Calu3 (cell line): ENCODE measurements at regions of chr6 and their contacts with region 1.

Region 1: GRCh38 chr6:151842816-151843215 is 35.3 kb downstream of the ESR1 start:
- DNase-seq: no peak
- H3K4me3 Mint-ChIP-seq: no peak overlapping the region
- H3K27ac Mint-ChIP-seq: no peak overlapping the region
- H3K4me1 Mint-ChIP-seq: no peaks in the 10 kb centered on the region
- H3K27me3 Mint-ChIP-seq: no peaks in the 10 kb centered on the region
- CTCF ChIP-seq: no peak

Region 2: DNA sequence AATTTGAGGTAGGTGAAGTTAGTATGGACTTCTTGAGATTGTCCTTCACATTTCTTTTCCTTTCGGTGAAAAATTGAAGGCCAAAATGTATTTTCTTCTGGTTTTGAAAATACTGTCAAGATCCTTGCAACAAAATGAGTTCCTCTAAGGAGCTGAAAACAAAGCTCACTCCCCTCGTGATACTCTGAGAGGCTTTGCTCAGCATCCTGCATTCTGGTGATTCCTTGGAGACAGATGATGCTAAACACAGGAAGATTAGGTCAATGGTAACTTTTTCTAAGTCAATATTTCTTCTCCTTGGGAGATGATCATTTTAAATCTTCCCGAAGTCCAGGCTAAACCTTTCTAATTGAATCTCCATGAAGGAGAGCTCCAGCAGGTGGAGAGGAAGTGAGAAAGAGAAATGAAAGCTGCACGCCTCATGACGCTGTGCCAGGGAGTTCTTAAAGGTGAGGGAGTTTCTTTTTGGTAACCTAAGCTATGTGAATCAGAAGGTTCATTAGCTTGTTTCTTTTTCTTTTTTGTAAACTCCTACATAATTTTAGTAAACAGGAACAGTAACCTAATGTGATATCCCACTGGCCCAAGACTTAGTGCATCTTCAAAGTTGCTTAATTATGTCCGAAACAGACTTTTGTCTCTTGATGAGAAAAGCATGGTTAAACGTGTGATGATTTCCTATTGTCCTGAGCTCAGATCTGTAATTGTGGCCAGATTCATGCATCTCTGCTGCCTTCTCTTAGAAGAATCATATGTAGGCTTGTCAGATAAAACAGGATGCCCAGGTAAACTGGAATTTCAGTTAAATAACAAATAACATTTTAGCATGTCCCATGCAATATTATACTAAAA is 20.3 kb before region 1 on chr6:
- CTCF ChIA-PET with region 1: no interaction called
- intact Hi-C with region 1: no loop called
- DNase-seq: no peak
- H3K4me3 Mint-ChIP-seq: no peak overlapping the region
- H3K27ac Mint-ChIP-seq: no peak overlapping the region
- H3K4me1 Mint-ChIP-seq: no peaks in the 10 kb centered on the region
- H3K27me3 Mint-ChIP-seq: no peaks in the 10 kb centered on the region
- CTCF ChIP-seq: no peak

Region 3: GRCh38 chr6:151858294-151858693 is 15.5 kb after region 1 on chr6:
- CTCF ChIA-PET with region 1: no interaction called
- intact Hi-C with region 1: loop called (anchors 1 kb)
- DNase-seq: no peak
- H3K4me3 Mint-ChIP-seq: no peak overlapping the region
- H3K27ac Mint-ChIP-seq: no peak overlapping the region
- H3K4me1 Mint-ChIP-seq: no peaks in the 10 kb centered on the region
- H3K27me3 Mint-ChIP-seq: no peaks in the 10 kb centered on the region
- CTCF ChIP-seq: no peak